ENCODE measurements at regions of chr6 and their contacts with region 1.

Region 1: GRCh38 chr6:150079604-150080003 is 10.7 kb upstream of the ULBP3 start:
- DNase-seq: no peak
- H3K4me3 Mint-ChIP-seq: no peak overlapping the region
- H3K27ac Mint-ChIP-seq: no peak overlapping the region
- H3K4me1 Mint-ChIP-seq: peaks cover 21% of the 10 kb centered on the region
- H3K27me3 Mint-ChIP-seq: peaks cover 35% of the 10 kb centered on the region

Region 2: DNA sequence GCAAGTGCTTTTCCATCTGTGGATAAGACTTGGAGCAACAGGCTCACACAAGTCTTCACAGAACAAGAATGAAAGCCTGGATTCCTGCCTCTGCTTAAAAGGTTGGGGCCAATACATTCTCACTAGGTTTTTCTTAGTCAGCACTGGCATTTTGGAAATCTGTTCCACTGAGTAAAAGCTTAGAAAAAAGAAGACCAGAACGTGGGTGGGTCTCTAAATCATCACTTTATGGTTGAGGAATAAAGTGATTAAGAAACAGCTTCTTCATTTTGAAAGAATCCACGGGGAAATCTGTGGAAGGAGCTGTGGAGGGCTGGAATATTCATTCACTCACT is 73.9 kb after region 1 on chr6:
- intact Hi-C with region 1: loop called (anchors 5 kb)
- DNase-seq: no peak
- H3K4me3 Mint-ChIP-seq: no peak overlapping the region
- H3K27ac Mint-ChIP-seq: no peak overlapping the region
- H3K4me1 Mint-ChIP-seq: peaks cover 27% of the 10 kb centered on the region
- H3K27me3 Mint-ChIP-seq: peaks cover 59% of the 10 kb centered on the region

Region 3: GRCh38 chr6:150334790-150335783 is 255.5 kb after region 1 on chr6:
- intact Hi-C with region 1: loop called (anchors 1 kb)
- DNase-seq: no peak
- H3K4me3 Mint-ChIP-seq: no peak overlapping the region
- H3K27ac Mint-ChIP-seq: no peak overlapping the region
- H3K4me1 Mint-ChIP-seq: no peaks in the 10 kb centered on the region
- H3K27me3 Mint-ChIP-seq: peaks cover 26% of the 10 kb centered on the region

Region 4: DNA sequence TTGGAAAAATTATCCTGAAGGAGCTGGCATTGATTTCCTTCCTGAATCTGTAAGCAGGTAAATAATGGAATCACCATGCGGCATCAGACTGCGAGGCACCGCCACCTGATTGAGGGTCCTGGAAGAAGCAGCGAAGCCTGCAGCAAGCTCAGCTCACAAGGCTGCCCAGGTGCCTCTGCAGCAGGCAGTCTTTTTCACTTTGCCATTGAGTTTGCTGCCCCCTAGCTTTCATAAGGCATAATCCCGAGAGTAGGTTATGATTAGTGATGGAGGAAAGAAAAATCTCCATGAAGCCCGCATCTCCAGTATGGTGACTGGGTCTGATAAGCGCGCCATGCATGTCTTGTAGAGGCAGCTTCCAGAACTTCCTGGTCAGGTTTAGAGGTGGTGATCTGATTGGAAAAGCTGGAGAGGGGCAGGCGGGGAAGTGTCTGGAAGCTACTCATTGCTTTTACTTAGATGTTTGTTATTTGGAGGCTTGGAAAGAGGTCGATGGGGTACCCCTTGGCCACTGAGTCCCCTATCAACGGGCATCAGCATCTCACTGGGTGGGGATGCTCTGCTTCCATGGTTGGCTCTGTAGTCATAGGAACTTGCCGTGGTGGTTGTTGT is 315.9 kb after region 1 on chr6:
- intact Hi-C with region 1: loop called (anchors 1 kb)
- DNase-seq: peak; percentile 20
- H3K4me3 Mint-ChIP-seq: no peak overlapping the region
- H3K27ac Mint-ChIP-seq: no peak overlapping the region
- H3K4me1 Mint-ChIP-seq: no peaks in the 10 kb centered on the region
- H3K27me3 Mint-ChIP-seq: peaks cover 31% of the 10 kb centered on the region

Region 5: DNA sequence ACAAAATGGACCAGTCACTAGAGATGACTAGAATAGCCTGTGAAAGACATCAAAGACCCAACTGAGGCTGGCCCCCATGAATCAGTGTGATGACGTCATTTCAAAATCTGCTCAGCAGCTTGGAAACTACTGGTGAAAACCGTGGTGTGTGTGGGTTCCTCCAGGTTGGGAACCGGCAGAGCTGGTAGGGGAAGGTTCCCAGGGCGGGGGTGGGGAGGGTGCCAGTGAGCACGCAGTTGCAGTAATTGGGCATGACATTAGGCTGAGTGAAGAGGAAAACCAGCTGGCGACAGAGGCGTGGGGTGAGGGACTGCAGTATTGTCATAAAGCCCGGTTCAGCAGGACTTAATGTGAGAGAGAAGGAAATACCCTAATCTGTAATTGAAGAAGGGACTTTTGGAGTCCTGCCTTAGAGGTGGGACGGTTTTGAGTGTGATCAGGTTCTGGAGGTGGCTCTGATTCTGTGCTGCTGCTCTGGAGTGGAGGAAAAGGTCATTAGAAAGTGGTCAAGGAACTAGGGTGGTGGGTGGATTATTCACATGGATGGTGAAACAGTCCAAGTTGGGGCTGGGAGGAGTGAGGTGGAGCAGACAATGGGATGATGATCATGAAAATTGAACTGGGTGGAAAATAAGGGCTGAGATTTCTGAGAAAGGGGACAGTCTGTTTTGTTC is 733.9 kb after region 1 on chr6:
- intact Hi-C with region 1: loop called (anchors 5 kb)
- DNase-seq: no peak
- H3K4me3 Mint-ChIP-seq: no peak overlapping the region
- H3K27ac Mint-ChIP-seq: peak overlapping the region; percentile 24
- H3K4me1 Mint-ChIP-seq: peaks cover 18% of the 10 kb centered on the region
- H3K27me3 Mint-ChIP-seq: peaks cover 24% of the 10 kb centered on the region

Measured in activated T-helper 2 cell treated with anti-CD3 and anti-CD28 coated beads, Interferon-gamma antibody, Interleukin-2, Interleukin-4, amounts not matched to agents 10 μg/mL and 5 μg/mL and 100 μg/mL, durations not matched to agents 14 hours and 24 hours and 36 hours (primary cell).